MCF 10A (cell line): ENCODE measurements at regions of chr5 and their contacts with region 1.

Region 1: DNA sequence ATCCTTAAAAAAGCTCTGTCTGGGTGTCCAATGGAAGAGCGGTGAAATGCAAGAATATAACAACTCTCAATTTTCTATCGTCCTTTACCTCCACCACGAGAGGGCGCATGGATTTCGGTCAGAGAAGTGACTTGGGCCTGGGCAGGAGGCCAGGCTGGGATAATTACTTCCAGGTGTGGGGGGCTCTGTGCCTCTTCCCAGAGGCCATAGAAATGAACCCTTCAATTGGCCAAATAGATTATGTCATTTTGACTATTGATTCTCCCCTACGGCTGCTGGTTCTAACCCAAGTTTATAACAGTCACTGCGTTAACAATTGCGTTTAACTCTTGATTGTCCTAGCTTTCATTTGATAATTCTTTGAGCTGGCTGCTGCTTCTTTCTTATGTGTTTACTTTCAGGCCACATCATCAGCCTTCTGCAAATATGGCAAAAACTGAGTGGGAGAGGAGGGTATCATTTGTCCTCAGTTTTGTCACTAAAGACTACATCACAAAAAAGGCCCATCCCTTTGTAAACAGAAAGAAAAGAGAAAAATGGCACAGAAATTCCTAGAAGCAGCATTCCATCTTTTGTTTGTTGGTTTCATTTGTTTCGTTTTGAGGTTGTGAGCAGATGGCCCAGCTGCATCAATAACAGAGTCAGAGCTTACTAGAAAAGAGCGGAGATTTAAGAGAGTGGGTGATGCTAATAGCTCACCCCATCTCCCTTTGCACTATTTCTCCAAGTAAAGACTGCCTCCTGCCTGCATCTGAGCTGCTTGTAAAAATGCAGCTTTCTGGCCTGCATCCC is 45.4 kb upstream of the ZFR start:
- DNase-seq: peak; percentile 82
- H3K4me3 Mint-ChIP-seq: no peak overlapping the region
- H3K27ac Mint-ChIP-seq: no peak overlapping the region
- H3K4me1 Mint-ChIP-seq: no peaks in the 10 kb centered on the region
- H3K27me3 Mint-ChIP-seq: no peaks in the 10 kb centered on the region
- CTCF ChIP-seq: peak; percentile 73

Region 2: DNA sequence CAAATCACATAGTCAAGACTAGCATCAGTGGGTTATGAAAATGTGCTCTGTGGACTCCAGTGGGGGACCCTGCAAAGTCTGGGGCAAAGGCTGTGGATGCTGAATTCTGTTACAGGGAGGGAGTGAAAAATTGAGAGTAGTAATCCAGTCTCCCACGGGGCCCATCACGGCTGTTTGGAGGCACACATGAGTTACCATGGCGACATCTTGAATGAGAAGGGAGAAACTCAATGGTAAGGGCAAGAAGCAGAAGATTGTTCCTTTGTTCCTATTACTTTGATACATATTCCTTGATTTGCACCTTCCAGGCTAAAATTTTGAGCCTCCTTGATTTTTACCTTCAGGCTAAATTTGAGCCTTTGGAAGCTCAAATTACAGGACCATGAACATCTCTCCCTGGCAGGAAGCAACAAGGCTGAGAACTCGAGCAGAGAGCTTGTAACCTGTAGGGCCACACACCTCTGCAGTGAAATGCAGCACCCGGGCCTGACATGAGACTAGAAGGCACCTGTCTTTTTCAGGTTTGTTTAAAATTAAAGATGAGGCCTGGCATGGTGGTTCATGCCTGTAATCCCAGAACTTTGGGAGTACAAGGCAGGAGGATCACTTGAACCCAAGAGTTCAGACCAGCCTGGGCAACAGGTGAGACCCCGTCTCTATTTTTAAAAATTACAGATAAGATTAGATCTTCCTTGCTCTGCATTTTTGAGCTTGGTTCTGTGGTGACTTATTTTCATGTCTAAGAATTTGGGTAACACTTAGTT is 14.5 kb before region 1 on chr5:
- CTCF ChIA-PET with region 1: interaction called, 26 read pairs
- POLR2A ChIA-PET with region 1: no interaction called
- intact Hi-C with region 1: no loop called
- DNase-seq: no peak
- H3K4me3 Mint-ChIP-seq: no peak overlapping the region
- H3K27ac Mint-ChIP-seq: no peak overlapping the region
- H3K4me1 Mint-ChIP-seq: no peaks in the 10 kb centered on the region
- H3K27me3 Mint-ChIP-seq: no peaks in the 10 kb centered on the region
- CTCF ChIP-seq: no peak

Region 3: GRCh38 chr5:32531885-32532520 is 42.0 kb after region 1 on chr5:
- CTCF ChIA-PET with region 1: interaction called, 12 read pairs
- POLR2A ChIA-PET with region 1: no interaction called
- intact Hi-C with region 1: no loop called
- DNase-seq: peak; percentile 50
- H3K4me3 Mint-ChIP-seq: peak overlapping the region; percentile 53
- H3K27ac Mint-ChIP-seq: peak overlapping the region; percentile 71
- H3K4me1 Mint-ChIP-seq: peaks cover 10% of the 10 kb centered on the region
- H3K27me3 Mint-ChIP-seq: no peaks in the 10 kb centered on the region
- CTCF ChIP-seq: no peak

Region 4: GRCh38 chr5:32595118-32595517 is 105.1 kb after region 1 on chr5:
- CTCF ChIA-PET with region 1: interaction called, 169 read pairs
- POLR2A ChIA-PET with region 1: interaction called, 23 read pairs
- intact Hi-C with region 1: loop called (anchors 1 kb)
- DNase-seq: no peak
- H3K4me3 Mint-ChIP-seq: no peak overlapping the region
- H3K27ac Mint-ChIP-seq: no peak overlapping the region
- H3K4me1 Mint-ChIP-seq: peaks cover 29% of the 10 kb centered on the region
- H3K27me3 Mint-ChIP-seq: no peaks in the 10 kb centered on the region
- CTCF ChIP-seq: no peak

Region 5: GRCh38 chr5:32916648-32917047 is 426.7 kb after region 1 on chr5:
- CTCF ChIA-PET with region 1: interaction called, 10 read pairs
- POLR2A ChIA-PET with region 1: no interaction called
- intact Hi-C with region 1: loop called (anchors 10 kb)
- DNase-seq: peak; percentile 66
- H3K4me3 Mint-ChIP-seq: no peak overlapping the region
- H3K27ac Mint-ChIP-seq: no peak overlapping the region
- H3K4me1 Mint-ChIP-seq: no peaks in the 10 kb centered on the region
- H3K27me3 Mint-ChIP-seq: no peaks in the 10 kb centered on the region
- CTCF ChIP-seq: peak; percentile 64

Region 6: GRCh38 chr5:33423018-33423630 is 933.1 kb after region 1 on chr5:
- CTCF ChIA-PET with region 1: interaction called, 10 read pairs
- POLR2A ChIA-PET with region 1: no interaction called
- intact Hi-C with region 1: no loop called
- DNase-seq: peak; percentile 49
- H3K4me3 Mint-ChIP-seq: no peak overlapping the region
- H3K27ac Mint-ChIP-seq: no peak overlapping the region
- H3K4me1 Mint-ChIP-seq: no peaks in the 10 kb centered on the region
- H3K27me3 Mint-ChIP-seq: no peaks in the 10 kb centered on the region
- CTCF ChIP-seq: peak; percentile 62